Right ventricle myocardium superior (tissue), 1 donor: ENCODE measurements at regions of chr7 and their contacts with region 1.

Region 1: DNA sequence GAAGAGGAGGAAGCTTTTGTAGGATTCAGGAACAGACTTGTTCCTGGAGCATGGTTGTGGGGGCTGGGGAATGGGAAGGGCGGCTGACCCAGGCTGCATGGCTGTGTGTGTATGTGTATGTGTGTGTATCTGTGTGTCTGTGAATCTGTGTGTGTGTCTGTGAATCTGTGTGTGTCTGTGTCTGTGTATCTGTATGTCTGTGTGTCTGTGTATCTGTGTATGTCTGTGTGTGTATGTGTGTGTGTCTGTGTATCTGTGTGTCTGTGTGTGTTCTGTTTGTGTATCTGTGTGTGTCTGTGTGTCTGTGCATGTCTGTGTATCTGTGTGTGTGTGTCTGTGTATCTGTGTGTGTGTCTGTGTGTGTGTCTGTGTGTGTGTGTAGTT is 6.6 kb upstream of the STX1A start:
- DNase-seq: no peak
- ATAC-seq: no peak

Region 2: DNA sequence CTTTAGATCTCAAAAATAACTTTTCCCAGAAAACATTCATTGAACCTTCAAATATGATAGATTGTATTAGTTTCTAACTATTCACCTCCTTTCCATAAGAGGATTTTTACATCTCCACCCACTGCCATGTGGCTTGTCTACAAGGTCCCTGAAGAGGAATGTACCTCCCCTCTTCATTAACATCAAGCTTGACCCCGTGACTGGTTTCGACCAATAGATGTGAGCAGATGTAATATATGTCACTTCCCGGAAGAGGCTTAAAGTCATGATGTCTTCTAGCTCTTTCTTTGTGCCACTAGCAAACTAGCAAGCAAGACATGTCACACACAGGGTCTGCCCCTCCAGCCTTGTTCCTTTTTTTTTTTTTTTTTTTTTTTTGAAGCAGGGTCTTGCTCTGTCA is 210.9 kb before region 1 on chr7:
- intact Hi-C with region 1: no loop called
- DNase-seq: no peak
- ATAC-seq: no peak

Region 3: GRCh38 chr7:73667344-73668102 is 58.6 kb before region 1 on chr7 and contains the start of gene VPS37D:
- intact Hi-C with region 1: loop called (anchors 5 kb)
- DNase-seq: peak; percentile 96
- ATAC-seq: peak; percentile 98
- total RNA-seq, gene VPS37D: 2.7 TPM